ENCODE measurements at regions of chr1 and their contacts with region 1.

Region 1: GRCh38 chr1:173824331-173825081 is at the starts of genes CENPL and DARS2:
- DNase-seq: peak; percentile 94
- ATAC-seq: peak; percentile 89
- H3K4me3 ChIP-seq: peak within 1 kb of the TSS; percentile 78 to 100 (median 93)
- H3K4me3 Mint-ChIP-seq: peak within 1 kb of the TSS; percentile 92
- H3K27ac ChIP-seq: peak within 1 kb of the TSS; percentile 77 to 87
- H3K27ac Mint-ChIP-seq: peak within 1 kb of the TSS; percentile 95
- H3K4me1 ChIP-seq: peaks cover 8 to 18% of the 10 kb centered on the region in 2 donors
- H3K4me1 Mint-ChIP-seq: peaks cover 21% of the 10 kb centered on the region
- H3K27me3 ChIP-seq: no peaks in the 10 kb centered on the region
- H3K27me3 Mint-ChIP-seq: no peaks in the 10 kb centered on the region
- CTCF ChIP-seq: no peak
- total RNA-seq, gene CENPL: 9.7 and 14.4 TPM in 2 replicates
- total RNA-seq, gene DARS2: 17.0 and 17.3 TPM in 2 replicates

Region 2: GRCh38 chr1:173527151-173527826 is 297.2 kb before region 1 on chr1:
- CTCF ChIA-PET with region 1: no interaction called
- POLR2A ChIA-PET with region 1: no interaction called
- intact Hi-C with region 1: no loop called
- DNase-seq: no peak
- ATAC-seq: no peak
- H3K4me3 ChIP-seq: no peak overlapping the region
- H3K4me3 Mint-ChIP-seq: no peak overlapping the region
- H3K27ac ChIP-seq: no peak overlapping the region
- H3K27ac Mint-ChIP-seq: no peak overlapping the region
- H3K4me1 ChIP-seq: no peaks in the 10 kb centered on the region
- H3K4me1 Mint-ChIP-seq: no peaks in the 10 kb centered on the region
- H3K27me3 ChIP-seq: no peaks in the 10 kb centered on the region
- H3K27me3 Mint-ChIP-seq: no peaks in the 10 kb centered on the region
- CTCF ChIP-seq: no peak

Region 3: DNA sequence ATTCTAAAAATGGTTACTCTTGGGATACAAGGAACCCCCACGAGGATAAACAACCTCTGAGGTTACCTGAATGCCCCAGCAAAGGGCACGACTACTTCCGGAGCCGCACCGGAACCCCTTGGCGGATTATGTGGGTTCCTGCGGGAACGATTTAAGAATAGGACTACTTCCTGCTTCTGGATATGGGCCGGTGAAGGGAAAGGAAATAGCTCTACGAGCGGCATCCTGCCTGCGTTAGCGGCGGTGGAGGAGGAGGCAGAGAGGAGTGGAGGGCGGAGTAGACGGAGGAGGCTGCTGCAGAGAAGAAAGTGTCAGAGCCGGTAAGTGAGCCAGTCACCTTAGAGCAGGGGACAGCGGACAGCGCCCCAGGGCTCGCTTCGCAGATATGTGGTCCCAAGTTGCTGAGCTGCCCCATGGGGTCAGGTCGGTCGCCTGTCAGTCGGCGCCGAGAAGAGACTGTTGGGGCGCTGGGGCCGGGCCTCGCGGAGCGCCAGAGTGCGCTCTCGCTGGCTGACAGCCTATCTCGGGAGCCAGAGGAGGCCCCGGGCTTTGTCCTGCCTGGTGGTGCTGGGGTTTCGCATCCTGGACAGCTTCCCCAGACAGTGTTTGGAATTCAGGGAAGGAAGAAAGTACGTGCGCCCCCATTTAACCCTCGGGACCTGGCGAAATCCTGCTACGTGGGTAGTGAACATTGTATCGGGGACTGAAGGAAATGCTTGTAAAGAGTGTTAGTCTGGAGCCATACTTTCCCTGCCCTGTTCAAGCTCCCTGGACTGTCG is 109.6 kb before region 1 on chr1 and contains the start of gene KLHL20:
- CTCF ChIA-PET with region 1: interaction called, 6 read pairs
- POLR2A ChIA-PET with region 1: interaction called, 3 read pairs
- intact Hi-C with region 1: loop called (anchors 1 kb)
- DNase-seq: peak; percentile 90
- ATAC-seq: peak; percentile 93
- H3K4me3 ChIP-seq: peak within 1 kb of the TSS; percentile 76 to 92 (median 84)
- H3K4me3 Mint-ChIP-seq: peak within 1 kb of the TSS; percentile 98
- H3K27ac ChIP-seq: peak within 1 kb of the TSS; percentile 75 to 84
- H3K27ac Mint-ChIP-seq: peak within 1 kb of the TSS; percentile 96
- H3K4me1 ChIP-seq: peaks cover 10 to 15% of the 10 kb centered on the region in 2 donors
- H3K4me1 Mint-ChIP-seq: peaks cover 23% of the 10 kb centered on the region
- H3K27me3 ChIP-seq: peaks cover 0 to 9% (median 2%) of the 10 kb centered on the region in 4 experiments
- H3K27me3 Mint-ChIP-seq: peaks cover 26% of the 10 kb centered on the region
- CTCF ChIP-seq: no peak
- total RNA-seq, gene KLHL20: 32.2 and 35.4 TPM in 2 replicates

Region 4: GRCh38 chr1:173876732-173877131 is 52.2 kb after region 1 on chr1:
- CTCF ChIA-PET with region 1: no interaction called
- POLR2A ChIA-PET with region 1: no interaction called
- intact Hi-C with region 1: no loop called
- DNase-seq: no peak
- ATAC-seq: no peak
- H3K4me3 ChIP-seq: no peak overlapping the region
- H3K4me3 Mint-ChIP-seq: no peak overlapping the region
- H3K27ac ChIP-seq: no peak overlapping the region
- H3K27ac Mint-ChIP-seq: no peak overlapping the region
- H3K4me1 ChIP-seq: no peaks in the 10 kb centered on the region
- H3K4me1 Mint-ChIP-seq: peaks cover 9% of the 10 kb centered on the region
- H3K27me3 ChIP-seq: no peaks in the 10 kb centered on the region
- H3K27me3 Mint-ChIP-seq: no peaks in the 10 kb centered on the region
- CTCF ChIP-seq: no peak

Measured in B cell (primary cell).